ENCODE measurements at regions of chr6 and their contacts with region 1.

Region 1: DNA sequence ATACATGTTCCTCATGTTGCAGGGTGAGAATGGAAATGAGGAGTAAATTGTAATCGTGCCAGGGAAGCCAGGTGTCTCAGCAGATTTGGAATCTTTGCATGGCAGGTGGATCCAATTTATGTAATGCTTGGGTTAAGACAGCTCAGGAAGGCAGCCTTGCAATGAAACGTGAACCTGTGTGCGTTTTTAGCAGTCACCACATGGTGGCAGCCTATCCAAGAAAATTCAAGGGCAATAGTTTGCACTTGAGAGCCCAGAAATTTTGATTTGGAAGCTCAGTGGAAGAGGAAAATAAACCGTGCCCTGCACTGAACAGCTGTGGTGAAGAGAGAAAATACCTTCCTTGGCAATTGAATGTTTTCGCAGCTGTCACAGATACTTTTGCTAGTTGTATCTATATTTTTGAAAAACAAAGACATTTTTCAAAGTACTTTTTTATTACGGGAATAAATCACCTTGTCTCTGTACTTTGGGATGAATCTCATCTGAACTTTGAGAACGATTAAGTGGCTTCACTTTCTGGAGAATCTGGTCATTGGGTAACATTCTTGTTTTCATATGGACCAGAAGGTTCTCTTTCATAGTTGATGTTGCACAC is 26.5 kb downstream of the MTHFD1L start:
- DNase-seq: peak; percentile 67 to 79
- H3K4me3 ChIP-seq: no peak overlapping the region
- H3K4me3 Mint-ChIP-seq: no peak overlapping the region
- H3K27ac Mint-ChIP-seq: no peak overlapping the region
- H3K4me1 ChIP-seq: no peaks in the 10 kb centered on the region
- H3K4me1 Mint-ChIP-seq: no peaks in the 10 kb centered on the region
- H3K27me3 ChIP-seq: no peaks in the 10 kb centered on the region
- H3K27me3 Mint-ChIP-seq: no peaks in the 10 kb centered on the region
- CTCF ChIP-seq: peak; percentile 79

Region 2: GRCh38 chr6:150800674-150801314 is 91.2 kb before region 1 on chr6:
- CTCF ChIA-PET with region 1: no interaction called
- POLR2A ChIA-PET with region 1: interaction called, 13 read pairs
- intact Hi-C with region 1: no loop called
- DNase-seq: no peak
- H3K4me3 ChIP-seq: no peak overlapping the region
- H3K4me3 Mint-ChIP-seq: no peak overlapping the region
- H3K27ac Mint-ChIP-seq: no peak overlapping the region
- H3K4me1 ChIP-seq: no peaks in the 10 kb centered on the region
- H3K4me1 Mint-ChIP-seq: no peaks in the 10 kb centered on the region
- H3K27me3 ChIP-seq: no peaks in the 10 kb centered on the region
- H3K27me3 Mint-ChIP-seq: no peaks in the 10 kb centered on the region
- CTCF ChIP-seq: no peak

Region 3: DNA sequence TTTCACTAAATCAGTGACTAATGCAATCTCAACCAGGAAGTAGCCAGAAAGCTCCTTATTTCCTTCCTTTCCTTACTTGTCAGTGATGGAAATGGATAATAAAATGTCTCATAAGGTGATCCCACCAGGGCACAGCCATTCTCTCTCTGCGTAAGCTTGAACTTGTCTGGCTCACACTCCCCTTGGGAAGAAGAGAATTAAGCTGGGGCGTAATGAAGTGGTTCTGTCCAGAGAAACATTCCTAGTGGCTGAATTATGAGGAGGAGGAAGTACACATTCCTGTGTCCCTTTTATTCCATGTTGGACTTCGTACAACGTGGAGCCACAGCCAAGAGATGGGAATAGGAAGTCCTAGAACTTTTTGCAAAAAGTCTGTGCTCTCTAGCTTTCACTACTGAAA is 67.2 kb after region 1 on chr6:
- CTCF ChIA-PET with region 1: no interaction called
- POLR2A ChIA-PET with region 1: no interaction called
- intact Hi-C with region 1: no loop called
- DNase-seq: no peak
- H3K4me3 ChIP-seq: no peak overlapping the region
- H3K4me3 Mint-ChIP-seq: no peak overlapping the region
- H3K27ac Mint-ChIP-seq: no peak overlapping the region
- H3K4me1 ChIP-seq: no peaks in the 10 kb centered on the region
- H3K4me1 Mint-ChIP-seq: no peaks in the 10 kb centered on the region
- H3K27me3 ChIP-seq: no peaks in the 10 kb centered on the region
- H3K27me3 Mint-ChIP-seq: no peaks in the 10 kb centered on the region
- CTCF ChIP-seq: no peak

Region 4: GRCh38 chr6:151004415-151005024 is 112.5 kb after region 1 on chr6:
- CTCF ChIA-PET with region 1: no interaction called
- POLR2A ChIA-PET with region 1: no interaction called
- intact Hi-C with region 1: loop called (anchors 2 kb)
- DNase-seq: no peak
- H3K4me3 ChIP-seq: no peak overlapping the region
- H3K4me3 Mint-ChIP-seq: no peak overlapping the region
- H3K27ac Mint-ChIP-seq: no peak overlapping the region
- H3K4me1 ChIP-seq: no peaks in the 10 kb centered on the region
- H3K4me1 Mint-ChIP-seq: no peaks in the 10 kb centered on the region
- H3K27me3 ChIP-seq: no peaks in the 10 kb centered on the region
- H3K27me3 Mint-ChIP-seq: no peaks in the 10 kb centered on the region
- CTCF ChIP-seq: no peak

Region 5: GRCh38 chr6:151029970-151030369 is 138.0 kb after region 1 on chr6:
- CTCF ChIA-PET with region 1: no interaction called
- POLR2A ChIA-PET with region 1: no interaction called
- intact Hi-C with region 1: no loop called
- DNase-seq: no peak
- H3K4me3 ChIP-seq: no peak overlapping the region
- H3K4me3 Mint-ChIP-seq: no peak overlapping the region
- H3K27ac Mint-ChIP-seq: no peak overlapping the region
- H3K4me1 ChIP-seq: no peaks in the 10 kb centered on the region
- H3K4me1 Mint-ChIP-seq: no peaks in the 10 kb centered on the region
- H3K27me3 ChIP-seq: no peaks in the 10 kb centered on the region
- H3K27me3 Mint-ChIP-seq: no peaks in the 10 kb centered on the region
- CTCF ChIP-seq: no peak

Region 6: GRCh38 chr6:151323791-151324487 is 432.0 kb after region 1 on chr6:
- CTCF ChIA-PET with region 1: interaction called, 29 read pairs
- POLR2A ChIA-PET with region 1: no interaction called
- intact Hi-C with region 1: loop called (anchors 2 kb)
- DNase-seq: peak; percentile 72 to 87
- H3K4me3 ChIP-seq: no peak overlapping the region
- H3K4me3 Mint-ChIP-seq: peak overlapping the region; percentile 24
- H3K27ac Mint-ChIP-seq: no peak overlapping the region
- H3K4me1 ChIP-seq: peaks cover 4% of the 10 kb centered on the region; the same call in 1 of the 2 replicates
- H3K4me1 Mint-ChIP-seq: no peaks in the 10 kb centered on the region
- H3K27me3 ChIP-seq: peaks cover 5% of the 10 kb centered on the region; the same call in 1 of the 2 replicates
- H3K27me3 Mint-ChIP-seq: peaks cover 8% of the 10 kb centered on the region
- CTCF ChIP-seq: peak; percentile 94 to 96

Region 7: DNA sequence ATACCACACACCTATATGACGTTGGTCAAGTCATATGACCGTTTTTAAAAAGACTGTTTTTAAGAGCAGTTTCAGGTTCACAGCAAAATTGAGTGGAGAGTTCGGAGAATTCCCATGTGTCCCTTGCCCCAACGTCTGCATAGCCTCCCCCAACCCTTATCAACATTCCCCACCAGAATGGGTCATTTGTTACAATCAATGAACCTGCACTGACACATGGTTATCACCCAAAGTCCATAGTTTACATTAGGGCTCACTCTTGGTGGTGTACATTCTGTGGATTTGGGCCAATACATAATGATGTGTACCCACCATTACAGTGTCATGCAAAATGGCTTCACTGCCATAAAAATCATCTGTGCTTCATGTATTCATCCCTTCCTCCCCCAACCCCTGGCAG is 447.4 kb after region 1 on chr6:
- CTCF ChIA-PET with region 1: interaction called, 32 read pairs
- POLR2A ChIA-PET with region 1: no interaction called
- intact Hi-C with region 1: loop called (anchors 1 kb)
- DNase-seq: no peak
- H3K4me3 ChIP-seq: no peak overlapping the region
- H3K4me3 Mint-ChIP-seq: no peak overlapping the region
- H3K27ac Mint-ChIP-seq: no peak overlapping the region
- H3K4me1 ChIP-seq: no peaks in the 10 kb centered on the region
- H3K4me1 Mint-ChIP-seq: no peaks in the 10 kb centered on the region
- H3K27me3 ChIP-seq: no peaks in the 10 kb centered on the region
- H3K27me3 Mint-ChIP-seq: no peaks in the 10 kb centered on the region
- CTCF ChIP-seq: no peak